ENCODE measurements at regions of chr2 and their contacts with region 1.

Region 1: DNA sequence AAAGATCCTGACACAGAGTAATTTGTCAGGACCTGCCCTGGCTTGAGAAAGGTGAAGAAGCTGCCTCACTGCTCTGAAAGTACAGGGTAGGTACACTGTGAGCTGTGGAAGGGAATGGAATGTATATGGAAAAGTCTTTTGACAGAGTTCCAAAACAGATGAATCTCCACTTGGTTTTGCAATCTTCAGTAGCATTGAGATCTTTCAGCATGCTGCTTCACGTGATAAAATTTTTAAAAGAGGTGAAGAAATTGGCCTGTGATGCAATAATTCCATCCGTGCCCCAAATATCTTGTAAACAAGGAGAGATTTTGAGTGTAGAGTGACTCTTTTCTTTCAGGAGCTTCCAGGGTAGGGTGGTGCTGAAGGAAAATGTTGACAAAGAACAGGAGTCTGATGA is 123.1 kb downstream of the OSR1 start:
- DNase-seq: no peak
- H3K4me3 ChIP-seq: no peak overlapping the region
- H3K27ac ChIP-seq: peak overlapping the region; percentile 56 to 65
- H3K4me1 ChIP-seq: no peaks in the 10 kb centered on the region
- H3K27me3 ChIP-seq: no peaks in the 10 kb centered on the region
- CTCF ChIP-seq: no peak
- POLR2A ChIP-seq: no peak

Region 2: GRCh38 chr2:19201911-19202462 is 33.3 kb before region 1 on chr2:
- intact Hi-C with region 1: loop called (anchors 2 kb)
- DNase-seq: no peak
- H3K4me3 ChIP-seq: no peak overlapping the region
- H3K27ac ChIP-seq: no peak overlapping the region
- H3K4me1 ChIP-seq: no peaks in the 10 kb centered on the region
- H3K27me3 ChIP-seq: no peaks in the 10 kb centered on the region
- CTCF ChIP-seq: no peak
- POLR2A ChIP-seq: no peak

Region 3: GRCh38 chr2:19272039-19272438 is 36.7 kb after region 1 on chr2:
- intact Hi-C with region 1: no loop called
- DNase-seq: no peak
- H3K4me3 ChIP-seq: no peak overlapping the region
- H3K27ac ChIP-seq: no peak overlapping the region
- H3K4me1 ChIP-seq: no peaks in the 10 kb centered on the region
- H3K27me3 ChIP-seq: no peaks in the 10 kb centered on the region
- CTCF ChIP-seq: no peak
- POLR2A ChIP-seq: no peak

Measured in breast epithelium (tissue), 4 donors.